GM12878 (cell line): ENCODE measurements at regions of chr10 and their contacts with region 1.

Region 1: GRCh38 chr10:16787361-16787791 is 29.8 kb downstream of the RSU1 start:
- DNase-seq: no peak
- ATAC-seq: peak; percentile 94
- H3K4me3 ChIP-seq: no peak overlapping the region
- H3K27ac ChIP-seq: peak overlapping the region; percentile 83
- H3K4me1 ChIP-seq: peaks cover 19% of the 10 kb centered on the region
- H3K27me3 ChIP-seq: no peaks in the 10 kb centered on the region
- CTCF ChIP-seq: no peak
- EP300 ChIP-seq: no peak
- POLR2A ChIP-seq: no peak
- RAD21 ChIP-seq: no peak

Region 2: GRCh38 chr10:16626697-16627096 is 160.7 kb before region 1 on chr10:
- CTCF ChIA-PET with region 1: no interaction called
- POLR2A ChIA-PET with region 1: no interaction called
- RAD21 ChIA-PET with region 1: no interaction called
- SMC1A ChIA-PET with region 1: no interaction called
- in situ Hi-C with region 1: no loop called
- intact Hi-C with region 1: no loop called
- DNase-seq: no peak
- ATAC-seq: no peak
- H3K4me3 ChIP-seq: no peak overlapping the region
- H3K27ac ChIP-seq: no peak overlapping the region
- H3K4me1 ChIP-seq: no peaks in the 10 kb centered on the region
- H3K27me3 ChIP-seq: no peaks in the 10 kb centered on the region
- CTCF ChIP-seq: no peak
- EP300 ChIP-seq: no peak
- POLR2A ChIP-seq: no peak
- RAD21 ChIP-seq: no peak

Region 3: DNA sequence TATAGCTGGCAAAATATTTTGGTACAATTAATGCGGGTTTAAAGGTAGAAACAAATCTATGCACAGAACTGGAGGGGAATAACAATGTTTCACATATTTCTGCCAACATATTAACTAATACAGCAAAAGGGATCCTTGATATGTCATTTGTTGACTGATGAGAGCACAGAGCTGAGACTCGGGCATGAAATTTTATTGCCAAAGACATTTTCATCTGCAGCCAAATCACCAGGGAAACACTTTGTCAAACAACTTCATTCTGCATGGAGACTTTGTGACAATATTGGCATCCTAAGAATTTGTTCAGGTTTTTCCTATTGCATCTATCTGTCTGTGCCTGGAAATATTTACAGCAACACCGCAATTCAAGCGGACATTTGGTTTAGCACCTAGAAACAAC is 147.9 kb before region 1 on chr10:
- CTCF ChIA-PET with region 1: no interaction called
- POLR2A ChIA-PET with region 1: no interaction called
- RAD21 ChIA-PET with region 1: no interaction called
- SMC1A ChIA-PET with region 1: no interaction called
- in situ Hi-C with region 1: no loop called
- intact Hi-C with region 1: no loop called
- DNase-seq: no peak
- ATAC-seq: no peak
- H3K4me3 ChIP-seq: no peak overlapping the region
- H3K27ac ChIP-seq: no peak overlapping the region
- H3K4me1 ChIP-seq: no peaks in the 10 kb centered on the region
- H3K27me3 ChIP-seq: no peaks in the 10 kb centered on the region
- CTCF ChIP-seq: no peak
- EP300 ChIP-seq: no peak
- POLR2A ChIP-seq: no peak
- RAD21 ChIP-seq: no peak

Region 4: GRCh38 chr10:16756561-16757222 is 30.7 kb before region 1 on chr10:
- CTCF ChIA-PET with region 1: no interaction called
- POLR2A ChIA-PET with region 1: no interaction called
- RAD21 ChIA-PET with region 1: no interaction called
- SMC1A ChIA-PET with region 1: no interaction called
- in situ Hi-C with region 1: no loop called
- intact Hi-C with region 1: no loop called
- DNase-seq: no peak
- ATAC-seq: no peak
- H3K4me3 ChIP-seq: no peak overlapping the region
- H3K27ac ChIP-seq: no peak overlapping the region
- H3K4me1 ChIP-seq: no peaks in the 10 kb centered on the region
- H3K27me3 ChIP-seq: no peaks in the 10 kb centered on the region
- CTCF ChIP-seq: no peak
- EP300 ChIP-seq: no peak
- POLR2A ChIP-seq: no peak
- RAD21 ChIP-seq: no peak

Region 5: DNA sequence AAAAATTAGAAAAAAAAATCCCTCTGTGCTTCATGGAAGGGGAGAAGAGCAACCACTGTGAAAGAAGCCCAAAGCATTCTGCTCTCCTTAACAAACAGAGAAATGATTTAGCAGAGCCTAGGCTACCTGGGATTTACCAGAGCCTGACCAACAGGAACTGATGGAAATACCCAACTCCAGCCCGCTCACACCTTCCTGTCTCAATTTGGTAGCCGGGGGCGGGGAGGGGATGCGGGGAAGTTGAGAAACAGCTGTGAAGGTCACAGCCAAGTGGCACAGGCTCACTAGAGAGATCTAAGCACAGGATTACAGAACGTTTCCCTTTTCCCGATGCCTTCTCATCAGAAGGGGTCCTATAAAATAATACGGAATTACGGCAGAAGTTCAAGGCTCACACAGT is 12.2 kb after region 1 on chr10:
- CTCF ChIA-PET with region 1: interaction called, 5 read pairs
- POLR2A ChIA-PET with region 1: interaction called, 3 read pairs
- RAD21 ChIA-PET with region 1: no interaction called
- SMC1A ChIA-PET with region 1: interaction called, 15 read pairs
- in situ Hi-C with region 1: no loop called
- intact Hi-C with region 1: no loop called
- DNase-seq: peak; percentile 45
- ATAC-seq: peak; percentile 95
- H3K4me3 ChIP-seq: peak overlapping the region; percentile 23
- H3K27ac ChIP-seq: peak overlapping the region; percentile 67
- H3K4me1 ChIP-seq: peaks cover 12% of the 10 kb centered on the region
- H3K27me3 ChIP-seq: no peaks in the 10 kb centered on the region
- CTCF ChIP-seq: no peak
- EP300 ChIP-seq: peak in 1 of 2 experiments; percentile 34; a peak in 1 of 4 replicates
- POLR2A ChIP-seq: no peak
- RAD21 ChIP-seq: no peak

Region 6: DNA sequence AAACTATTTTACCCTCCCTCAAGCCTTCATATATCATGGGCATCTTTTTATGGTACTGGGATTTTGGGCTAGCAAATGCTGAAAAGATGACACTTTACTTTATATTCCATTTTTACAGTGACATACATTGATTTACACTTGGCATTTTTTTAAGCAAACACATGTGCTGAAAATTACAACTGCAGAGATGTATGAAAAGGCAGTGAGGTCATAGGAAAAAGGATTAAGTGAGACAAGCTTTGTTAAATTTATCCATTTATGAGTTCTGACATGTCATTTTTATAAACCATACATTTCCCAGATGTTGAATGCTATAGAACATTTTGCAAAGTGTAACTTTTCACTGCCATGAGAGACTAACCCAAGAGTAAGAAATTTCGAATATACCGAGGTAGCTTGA is 98.7 kb after region 1 on chr10:
- CTCF ChIA-PET with region 1: no interaction called
- POLR2A ChIA-PET with region 1: no interaction called
- RAD21 ChIA-PET with region 1: no interaction called
- SMC1A ChIA-PET with region 1: no interaction called
- in situ Hi-C with region 1: no loop called
- intact Hi-C with region 1: no loop called
- DNase-seq: no peak
- ATAC-seq: no peak
- H3K4me3 ChIP-seq: no peak overlapping the region
- H3K27ac ChIP-seq: no peak overlapping the region
- H3K4me1 ChIP-seq: no peaks in the 10 kb centered on the region
- H3K27me3 ChIP-seq: peaks cover 0 to 1% of the 10 kb centered on the region in 2 experiments; a peak in 1 of 4 replicates
- CTCF ChIP-seq: no peak
- EP300 ChIP-seq: no peak
- POLR2A ChIP-seq: no peak
- RAD21 ChIP-seq: no peak